ENCODE measurements at regions of chr11 and their contacts with region 1.

Region 1: DNA sequence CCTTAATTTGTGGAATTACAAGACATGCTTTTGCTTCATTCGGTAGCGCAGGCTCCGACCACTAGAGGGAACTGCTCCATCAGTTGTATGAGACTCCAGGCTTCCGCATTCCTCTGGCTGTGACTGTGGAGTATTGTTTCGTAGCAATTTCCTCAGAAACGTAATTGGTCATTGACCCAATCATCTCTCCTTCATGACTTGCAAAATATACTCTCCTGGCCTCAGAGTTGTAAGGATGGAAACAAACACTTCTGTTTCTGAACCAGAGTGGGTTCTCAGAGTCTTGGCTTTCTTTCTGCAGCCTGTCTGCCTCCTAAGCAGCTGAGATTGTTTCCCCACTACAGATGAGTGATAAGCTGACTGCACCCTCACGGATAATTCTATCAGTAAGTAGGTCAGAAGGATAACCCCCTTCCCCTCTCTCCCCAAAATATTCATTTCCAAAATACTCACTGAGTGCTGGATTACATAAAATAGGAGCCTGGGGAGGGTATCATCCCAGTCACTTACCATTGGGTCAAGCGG is 146.8 kb upstream of the ZC3H12C start:
- DNase-seq: peak; percentile 83
- H3K4me3 Mint-ChIP-seq: peak overlapping the region; percentile 3
- H3K27ac Mint-ChIP-seq: no peak overlapping the region
- H3K4me1 Mint-ChIP-seq: peaks cover 6% of the 10 kb centered on the region
- H3K27me3 Mint-ChIP-seq: peaks cover 6% of the 10 kb centered on the region

Region 2: DNA sequence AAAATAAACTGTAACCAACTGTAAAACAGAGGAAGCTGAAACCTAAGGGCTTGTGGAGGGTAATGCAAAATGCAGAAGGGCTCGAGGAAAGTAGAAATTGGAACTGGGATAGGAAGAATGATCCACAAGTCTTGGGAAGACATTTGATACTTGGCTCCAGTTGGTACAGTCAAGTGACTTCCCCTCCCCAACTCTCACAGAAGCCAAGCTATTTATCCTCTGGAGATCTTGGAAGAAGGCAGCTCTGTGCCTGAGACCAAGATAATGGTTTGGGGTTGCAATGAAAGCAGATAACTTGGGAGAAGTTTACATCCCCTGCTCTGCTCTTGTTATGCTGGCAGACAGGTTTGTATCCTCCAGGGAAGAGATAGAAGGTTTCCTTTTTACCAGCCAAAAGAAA is 52.1 kb before region 1 on chr11:
- CTCF ChIA-PET with region 1: no interaction called
- intact Hi-C with region 1: no loop called
- DNase-seq: no peak
- H3K4me3 Mint-ChIP-seq: no peak overlapping the region
- H3K27ac Mint-ChIP-seq: no peak overlapping the region
- H3K4me1 Mint-ChIP-seq: no peaks in the 10 kb centered on the region
- H3K27me3 Mint-ChIP-seq: no peaks in the 10 kb centered on the region

Region 3: DNA sequence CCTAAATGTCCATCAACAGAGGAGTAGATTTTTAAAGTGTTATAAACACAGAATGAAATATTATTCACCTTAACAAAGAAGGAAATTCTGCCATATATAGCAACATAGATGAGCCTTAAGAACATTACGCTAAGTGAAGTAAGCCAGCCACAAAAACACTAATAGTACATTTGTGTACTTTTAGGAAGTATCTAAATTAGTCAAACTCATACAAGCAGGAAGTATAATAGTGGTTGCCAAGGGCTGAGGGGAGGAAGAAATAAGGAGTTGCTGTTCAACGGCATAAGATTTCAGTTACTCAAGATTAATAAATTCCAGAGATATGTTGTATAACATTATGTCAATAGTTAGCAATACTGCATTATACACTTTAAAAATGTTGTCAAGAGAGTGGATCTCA is 34.9 kb before region 1 on chr11:
- CTCF ChIA-PET with region 1: no interaction called
- intact Hi-C with region 1: no loop called
- DNase-seq: no peak
- H3K4me3 Mint-ChIP-seq: no peak overlapping the region
- H3K27ac Mint-ChIP-seq: no peak overlapping the region
- H3K4me1 Mint-ChIP-seq: no peaks in the 10 kb centered on the region
- H3K27me3 Mint-ChIP-seq: no peaks in the 10 kb centered on the region

Region 4: DNA sequence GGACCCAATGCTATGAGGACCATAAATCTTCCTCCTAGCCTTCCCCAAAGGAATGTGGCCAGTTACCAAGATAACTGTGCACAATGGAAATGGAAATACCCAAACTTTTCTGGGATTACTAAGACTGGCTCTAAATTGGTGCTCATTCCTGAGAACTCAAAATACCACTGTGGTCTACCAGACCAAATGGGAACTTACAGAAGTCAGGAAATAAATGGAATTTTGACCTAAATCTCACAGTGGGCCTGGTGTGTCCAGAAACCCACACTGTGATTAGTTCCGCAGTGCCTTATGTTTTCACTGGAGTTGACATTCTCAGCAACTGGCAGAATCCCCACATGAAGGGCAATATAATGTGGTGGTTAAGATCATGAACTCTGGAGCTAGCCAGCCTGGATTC is 47.4 kb after region 1 on chr11:
- CTCF ChIA-PET with region 1: no interaction called
- intact Hi-C with region 1: no loop called
- DNase-seq: no peak
- H3K4me3 Mint-ChIP-seq: no peak overlapping the region
- H3K27ac Mint-ChIP-seq: no peak overlapping the region
- H3K4me1 Mint-ChIP-seq: no peaks in the 10 kb centered on the region
- H3K27me3 Mint-ChIP-seq: no peaks in the 10 kb centered on the region

Region 5: GRCh38 chr11:110092515-110093404 is 146.4 kb after region 1 on chr11 and contains the start of gene ZC3H12C:
- CTCF ChIA-PET with region 1: no interaction called
- intact Hi-C with region 1: loop called (anchors 1 kb)
- DNase-seq: peak; percentile 73
- H3K4me3 Mint-ChIP-seq: peak within 1 kb of the TSS; percentile 78
- H3K27ac Mint-ChIP-seq: no peak within 1 kb of the TSS
- H3K4me1 Mint-ChIP-seq: peaks cover 11% of the 10 kb centered on the region
- H3K27me3 Mint-ChIP-seq: peaks cover 49% of the 10 kb centered on the region
- total RNA-seq, gene ZC3H12C: not detected

Region 6: GRCh38 chr11:110173811-110174644 is 227.6 kb after region 1 on chr11:
- CTCF ChIA-PET with region 1: no interaction called
- intact Hi-C with region 1: loop called (anchors 5 kb)
- DNase-seq: peak; percentile 83
- H3K4me3 Mint-ChIP-seq: no peak overlapping the region
- H3K27ac Mint-ChIP-seq: no peak overlapping the region
- H3K4me1 Mint-ChIP-seq: peaks cover 6% of the 10 kb centered on the region
- H3K27me3 Mint-ChIP-seq: peaks cover 4% of the 10 kb centered on the region

Region 7: DNA sequence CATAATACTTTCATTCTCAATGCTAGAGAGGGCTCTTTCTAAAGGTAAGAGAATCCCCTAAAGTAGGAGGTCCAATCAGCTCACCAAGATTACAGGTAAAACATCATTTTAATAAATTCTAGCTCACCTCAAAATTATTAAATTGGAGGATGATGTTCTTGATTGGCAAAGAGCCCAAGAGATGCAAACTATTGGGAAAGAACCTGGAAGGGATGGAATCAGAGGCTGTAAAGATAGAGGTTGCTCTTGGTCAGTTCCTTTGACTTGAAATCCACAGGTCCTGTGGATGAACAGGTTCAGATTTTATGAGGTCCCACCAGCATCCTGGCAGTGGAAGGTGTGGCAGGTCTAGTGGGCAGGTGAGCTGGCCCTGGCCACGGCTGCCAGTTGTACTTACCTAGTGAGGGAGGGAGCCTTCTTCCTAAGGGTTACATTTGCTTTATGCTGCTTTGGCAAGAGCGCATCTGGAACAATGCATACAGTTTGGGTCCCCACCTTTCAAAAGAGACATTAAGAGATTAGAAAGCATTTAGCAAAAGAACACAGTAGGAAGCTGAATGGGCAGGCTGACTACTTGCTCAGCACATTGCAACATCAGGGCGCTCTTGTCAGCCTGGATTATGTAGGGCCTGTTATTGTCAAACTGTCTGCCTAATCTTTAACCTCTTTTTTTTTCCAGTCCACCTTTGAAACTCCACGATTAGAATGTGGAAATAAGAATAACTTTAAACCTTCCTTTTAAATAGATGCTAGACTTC is 253.0 kb after region 1 on chr11:
- CTCF ChIA-PET with region 1: no interaction called
- intact Hi-C with region 1: loop called (anchors 2 kb)
- DNase-seq: no peak
- H3K4me3 Mint-ChIP-seq: no peak overlapping the region
- H3K27ac Mint-ChIP-seq: no peak overlapping the region
- H3K4me1 Mint-ChIP-seq: no peaks in the 10 kb centered on the region
- H3K27me3 Mint-ChIP-seq: no peaks in the 10 kb centered on the region

Region 8: DNA sequence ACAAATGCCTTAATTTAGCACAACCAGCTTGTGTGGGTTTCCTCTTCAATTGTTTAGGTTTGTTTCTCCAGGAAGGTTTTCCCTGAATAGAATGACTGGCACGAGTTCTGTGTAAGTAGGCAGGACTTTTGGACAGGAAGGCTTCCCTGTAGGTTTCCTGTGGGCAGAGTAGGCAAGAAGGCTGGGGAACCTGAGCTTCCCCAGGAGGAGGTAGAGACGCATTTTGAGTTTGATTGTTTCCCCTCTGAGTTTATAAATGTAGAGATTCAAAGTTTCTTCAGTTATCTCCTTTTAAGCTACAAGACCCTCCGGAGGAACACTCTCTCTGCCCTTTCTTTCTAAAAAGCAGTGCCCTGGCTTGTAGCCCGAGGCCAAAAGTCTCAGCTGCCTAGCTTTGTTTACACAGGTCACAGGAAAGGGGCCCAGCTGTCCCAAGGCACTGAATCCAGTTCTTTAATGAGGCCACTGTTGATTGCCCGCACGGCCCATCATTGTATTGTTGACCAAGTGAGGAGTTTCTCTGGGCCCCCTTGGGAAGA is 416.7 kb after region 1 on chr11:
- CTCF ChIA-PET with region 1: no interaction called
- intact Hi-C with region 1: loop called (anchors 1 kb)
- DNase-seq: no peak
- H3K4me3 Mint-ChIP-seq: no peak overlapping the region
- H3K27ac Mint-ChIP-seq: no peak overlapping the region
- H3K4me1 Mint-ChIP-seq: peaks cover 8% of the 10 kb centered on the region
- H3K27me3 Mint-ChIP-seq: peaks cover 3% of the 10 kb centered on the region